ENCODE measurements at regions of chr3 and their contacts with region 1.

Region 1: DNA sequence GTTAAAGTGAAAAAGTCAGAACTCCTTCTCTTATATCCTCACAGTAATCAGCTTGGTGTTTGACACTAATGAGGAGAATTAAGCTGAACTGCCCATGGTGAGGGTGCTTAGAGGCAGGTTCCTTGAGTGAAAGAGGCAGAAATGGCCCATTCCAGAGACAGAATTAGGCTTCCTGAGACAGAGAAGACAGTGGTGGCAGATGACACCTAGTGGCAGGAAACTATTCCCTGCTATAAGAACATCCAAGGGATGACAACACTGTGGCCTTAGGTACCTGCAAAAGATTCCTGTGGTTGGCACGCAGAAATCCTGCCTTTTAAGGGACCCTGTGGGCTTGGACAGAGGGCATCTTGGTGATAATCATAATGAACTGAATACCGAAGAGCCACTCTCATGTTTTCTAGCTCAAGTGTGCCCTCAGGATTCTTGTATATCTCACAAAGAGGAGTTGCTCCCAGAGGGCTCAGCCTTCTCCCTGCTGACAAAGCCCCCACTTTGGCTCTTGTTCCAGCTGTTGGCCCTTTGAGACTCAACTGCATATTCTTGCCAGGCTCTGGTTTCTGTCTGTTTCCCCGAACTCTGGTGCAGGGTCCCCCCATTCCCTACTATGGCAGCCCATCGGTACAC is 56.0 kb downstream of the KBTBD12 start:
- DNase-seq: no peak
- ATAC-seq: peak; percentile 83

Region 2: GRCh38 chr3:127652231-127652995 is 318.7 kb before region 1 on chr3:
- intact Hi-C with region 1: loop called (anchors 2 kb)
- DNase-seq: peak; percentile 68
- ATAC-seq: peak; percentile 91

Region 3: GRCh38 chr3:127857333-127857732 is 113.7 kb before region 1 on chr3:
- intact Hi-C with region 1: loop called (anchors 10 kb)
- DNase-seq: no peak
- ATAC-seq: no peak

Region 4: GRCh38 chr3:128210711-128211110 is 239.6 kb after region 1 on chr3:
- intact Hi-C with region 1: no loop called
- DNase-seq: no peak
- ATAC-seq: no peak

Region 5: GRCh38 chr3:128650096-128651050 is 679.3 kb after region 1 on chr3 and contains the start of gene RPN1:
- intact Hi-C with region 1: no loop called
- DNase-seq: peak; percentile 98
- ATAC-seq: peak; percentile 99
- total RNA-seq, gene RPN1: 104 TPM

Measured in left ventricle myocardium superior (tissue), 1 donor.